Naive thymus-derived CD4-positive, alpha-beta T cell (primary cell): ENCODE measurements at regions of chr5 and their contacts with region 1.

Region 1: GRCh38 chr5:88680253-88681132 is 202.5 kb downstream of the MEF2C start:
- DNase-seq: peak; percentile 53 to 87 (median 77)
- ATAC-seq: peak; percentile 93
- H3K4me3 ChIP-seq: peak overlapping the region; percentile 36
- H3K4me3 Mint-ChIP-seq: peak overlapping the region; percentile 30 to 65 (median 58)
- H3K27ac ChIP-seq: no peak overlapping the region
- H3K27ac Mint-ChIP-seq: peak overlapping the region in 2 of 9 donors; percentile 25 to 30
- H3K4me1 ChIP-seq: peaks cover 0 to 6% of the 10 kb centered on the region in 2 donors
- H3K4me1 Mint-ChIP-seq: peaks cover 15 to 37% (median 25%) of the 10 kb centered on the region in 7 donors
- H3K27me3 ChIP-seq: peaks cover 32 to 60% of the 10 kb centered on the region in 2 donors
- H3K27me3 Mint-ChIP-seq: peaks cover 78 to 92% (median 80%) of the 10 kb centered on the region in 5 donors

Region 2: DNA sequence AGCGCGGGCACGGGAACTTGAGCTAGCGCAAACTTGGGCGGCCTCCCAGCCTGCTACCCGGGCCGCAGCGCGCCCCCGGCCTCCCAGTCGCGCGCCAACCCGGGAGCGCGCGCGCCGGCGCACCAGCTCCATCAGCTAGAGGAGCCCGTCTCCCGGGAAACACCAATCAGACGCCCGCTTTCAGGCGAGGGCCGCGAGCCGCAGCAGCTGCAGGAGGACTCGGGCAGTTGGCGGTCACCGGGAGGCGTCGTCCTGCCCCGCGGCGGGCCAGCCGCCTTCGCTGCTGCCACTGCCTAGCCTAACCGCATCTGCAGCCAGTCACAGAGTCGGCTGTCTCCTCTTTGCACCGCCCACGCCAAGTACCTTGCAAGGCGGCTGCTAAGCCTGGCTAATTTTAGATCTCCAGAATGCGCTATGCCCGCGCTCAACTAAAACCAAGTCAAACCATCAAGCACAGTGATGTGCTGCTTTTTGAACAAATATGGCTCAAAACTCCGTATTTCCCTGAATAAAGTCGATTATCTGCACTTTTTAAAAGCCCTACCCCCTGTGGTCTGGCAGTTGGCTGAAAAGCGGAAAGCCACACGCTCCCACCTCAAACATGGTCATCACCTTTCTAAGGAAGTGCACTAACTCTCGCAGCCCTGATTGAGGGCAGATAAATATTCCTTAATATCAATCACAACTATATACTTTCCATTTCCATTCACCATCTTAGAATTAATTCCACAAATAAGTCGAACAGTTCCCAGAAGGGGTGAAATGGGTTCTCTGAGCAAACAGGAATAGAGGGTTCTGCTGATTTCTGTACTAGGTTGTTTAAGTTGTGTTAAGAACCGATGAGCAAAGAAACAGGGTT is 19.3 kb before region 1 on chr5:
- CTCF ChIA-PET with region 1: no interaction called
- POLR2A ChIA-PET with region 1: no interaction called
- intact Hi-C with region 1: loop called in 1 of 2 experiments (anchors 1 kb)
- DNase-seq: peak in 1 of 9 donors; percentile 57
- ATAC-seq: peak; percentile 38
- H3K4me3 ChIP-seq: peak overlapping the region; percentile 15
- H3K4me3 Mint-ChIP-seq: peak overlapping the region in 9 of 10 donors; percentile 43 to 82 (median 62)
- H3K27ac ChIP-seq: no peak overlapping the region
- H3K27ac Mint-ChIP-seq: peak overlapping the region in 2 of 9 donors; percentile 28 to 44
- H3K4me1 ChIP-seq: peaks cover 3 to 6% of the 10 kb centered on the region in 2 donors
- H3K4me1 Mint-ChIP-seq: peaks cover 6 to 23% (median 19%) of the 10 kb centered on the region in 7 donors
- H3K27me3 ChIP-seq: peaks cover 19 to 25% of the 10 kb centered on the region in 2 donors
- H3K27me3 Mint-ChIP-seq: peaks cover 69 to 82% (median 78%) of the 10 kb centered on the region in 5 donors

Region 3: GRCh38 chr5:88666761-88667495 is 13.6 kb before region 1 on chr5:
- CTCF ChIA-PET with region 1: no interaction called
- POLR2A ChIA-PET with region 1: no interaction called
- intact Hi-C with region 1: loop called in 1 of 2 experiments (anchors 1 kb)
- DNase-seq: no peak
- ATAC-seq: no peak
- H3K4me3 ChIP-seq: peak overlapping the region; percentile 45
- H3K4me3 Mint-ChIP-seq: peak overlapping the region; percentile 75 to 88 (median 86)
- H3K27ac ChIP-seq: no peak overlapping the region
- H3K27ac Mint-ChIP-seq: peak overlapping the region in 3 of 9 donors; percentile 0 to 6 (median 3)
- H3K4me1 ChIP-seq: peaks cover 7 to 8% of the 10 kb centered on the region in 2 donors
- H3K4me1 Mint-ChIP-seq: peaks cover 11 to 34% (median 25%) of the 10 kb centered on the region in 7 donors
- H3K27me3 ChIP-seq: peaks cover 12 to 29% of the 10 kb centered on the region in 2 donors
- H3K27me3 Mint-ChIP-seq: peaks cover 92 to 98% (median 93%) of the 10 kb centered on the region in 5 donors